ENCODE measurements at regions of chr17 and their contacts with region 1.

Region 1: GRCh38 chr17:78250891-78251794 is 19.7 kb downstream of the TMEM235 start:
- DNase-seq: peak; percentile 86 to 97
- H3K4me3 ChIP-seq: peak overlapping the region in 3 of 4 experiments; percentile 6 to 23 (median 17); a peak in 1 of 8 replicates
- H3K27ac ChIP-seq: no peak overlapping the region
- H3K4me1 ChIP-seq: peaks cover 0 to 23% (median 13%) of the 10 kb centered on the region in 4 experiments; a peak in 5 of 7 replicates
- H3K27me3 ChIP-seq: no peaks in the 10 kb centered on the region
- CTCF ChIP-seq: peak; percentile 99
- EP300 ChIP-seq: no peak; a peak in 1 of 3 replicates
- POLR2A ChIP-seq: no peak
- RAD21 ChIP-seq: peak; percentile 93 to 95

Region 2: GRCh38 chr17:78197147-78197832 is 53.9 kb before region 1 on chr17:
- CTCF ChIA-PET with region 1: interaction called, 19 read pairs
- POLR2A ChIA-PET with region 1: interaction called, 3 read pairs
- DNase-seq: no peak
- H3K4me3 ChIP-seq: no peak overlapping the region
- H3K27ac ChIP-seq: peak overlapping the region; percentile 29; the same call in 1 of the 2 replicates
- H3K4me1 ChIP-seq: peaks cover 0 to 11% (median 4%) of the 10 kb centered on the region in 4 experiments; a peak in 5 of 7 replicates
- H3K27me3 ChIP-seq: no peaks in the 10 kb centered on the region
- CTCF ChIP-seq: no peak
- EP300 ChIP-seq: no peak
- POLR2A ChIP-seq: no peak
- RAD21 ChIP-seq: no peak

Region 3: GRCh38 chr17:78226749-78227399 is 24.3 kb before region 1 on chr17:
- CTCF ChIA-PET with region 1: interaction called, 35 read pairs
- POLR2A ChIA-PET with region 1: interaction called, 19 read pairs
- DNase-seq: no peak
- H3K4me3 ChIP-seq: no peak overlapping the region
- H3K27ac ChIP-seq: no peak overlapping the region
- H3K4me1 ChIP-seq: peaks cover 0 to 6% (median 5%) of the 10 kb centered on the region in 4 experiments; a peak in 5 of 7 replicates
- H3K27me3 ChIP-seq: peaks cover 0 to 14% (median 12%) of the 10 kb centered on the region in 4 experiments; a peak in 6 of 7 replicates
- CTCF ChIP-seq: no peak
- EP300 ChIP-seq: no peak
- POLR2A ChIP-seq: no peak
- RAD21 ChIP-seq: no peak

Region 4: GRCh38 chr17:78272181-78272913 is 21.2 kb after region 1 on chr17:
- CTCF ChIA-PET with region 1: interaction called, 50 read pairs
- POLR2A ChIA-PET with region 1: interaction called, 23 read pairs
- DNase-seq: no peak
- H3K4me3 ChIP-seq: no peak overlapping the region
- H3K27ac ChIP-seq: no peak overlapping the region; the same call in 1 of the 2 replicates
- H3K4me1 ChIP-seq: peaks cover 16 to 50% (median 39%) of the 10 kb centered on the region in 4 experiments
- H3K27me3 ChIP-seq: peaks cover 0 to 2% (median 0%) of the 10 kb centered on the region in 4 experiments; a peak in 4 of 7 replicates
- CTCF ChIP-seq: no peak
- EP300 ChIP-seq: no peak
- POLR2A ChIP-seq: no peak
- RAD21 ChIP-seq: no peak

Region 5: GRCh38 chr17:78307872-78308638 is 56.9 kb after region 1 on chr17:
- CTCF ChIA-PET with region 1: interaction called, 12 read pairs
- POLR2A ChIA-PET with region 1: interaction called, 3 read pairs
- DNase-seq: no peak
- H3K4me3 ChIP-seq: no peak overlapping the region
- H3K27ac ChIP-seq: no peak overlapping the region
- H3K4me1 ChIP-seq: no peaks in the 10 kb centered on the region
- H3K27me3 ChIP-seq: peaks cover 0 to 2% (median 0%) of the 10 kb centered on the region in 4 experiments; a peak in 2 of 7 replicates
- CTCF ChIP-seq: peak; percentile 39 to 42 (median 41)
- EP300 ChIP-seq: no peak
- POLR2A ChIP-seq: no peak
- RAD21 ChIP-seq: peak in 1 of 2 experiments; percentile 35; a peak in 2 of 4 replicates

Region 6: DNA sequence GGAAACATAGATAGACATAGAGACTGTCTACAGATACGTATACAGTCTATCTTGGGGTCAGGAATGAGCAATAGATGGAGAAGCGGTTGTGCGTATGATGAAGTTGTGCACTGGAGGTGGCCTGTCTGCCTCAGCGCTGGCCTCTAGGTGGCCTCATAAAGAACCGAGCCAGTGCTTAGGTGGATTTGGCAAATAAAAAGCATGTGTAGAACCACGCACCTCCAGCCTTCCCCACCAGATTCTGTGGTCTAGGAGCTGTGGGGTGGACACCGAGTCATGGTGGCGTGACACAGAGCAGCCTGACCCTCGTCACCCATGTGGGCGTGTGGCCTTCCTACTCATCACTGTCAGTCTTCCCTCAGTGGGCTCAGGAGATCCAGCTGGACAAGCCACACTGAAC is 161.3 kb after region 1 on chr17:
- CTCF ChIA-PET with region 1: interaction called, 16 read pairs
- POLR2A ChIA-PET with region 1: no interaction called
- DNase-seq: no peak
- H3K4me3 ChIP-seq: no peak overlapping the region
- H3K27ac ChIP-seq: no peak overlapping the region
- H3K4me1 ChIP-seq: peaks cover 0 to 16% (median 7%) of the 10 kb centered on the region in 4 experiments; a peak in 5 of 7 replicates
- H3K27me3 ChIP-seq: no peaks in the 10 kb centered on the region
- CTCF ChIP-seq: peak; percentile 33 to 74 (median 68)
- EP300 ChIP-seq: no peak
- POLR2A ChIP-seq: no peak
- RAD21 ChIP-seq: peak; percentile 15 to 43; a peak in 3 of 4 replicates

Measured in H1 (cell line).